ENCODE measurements at regions of chr3 and their contacts with region 1.

Region 1: DNA sequence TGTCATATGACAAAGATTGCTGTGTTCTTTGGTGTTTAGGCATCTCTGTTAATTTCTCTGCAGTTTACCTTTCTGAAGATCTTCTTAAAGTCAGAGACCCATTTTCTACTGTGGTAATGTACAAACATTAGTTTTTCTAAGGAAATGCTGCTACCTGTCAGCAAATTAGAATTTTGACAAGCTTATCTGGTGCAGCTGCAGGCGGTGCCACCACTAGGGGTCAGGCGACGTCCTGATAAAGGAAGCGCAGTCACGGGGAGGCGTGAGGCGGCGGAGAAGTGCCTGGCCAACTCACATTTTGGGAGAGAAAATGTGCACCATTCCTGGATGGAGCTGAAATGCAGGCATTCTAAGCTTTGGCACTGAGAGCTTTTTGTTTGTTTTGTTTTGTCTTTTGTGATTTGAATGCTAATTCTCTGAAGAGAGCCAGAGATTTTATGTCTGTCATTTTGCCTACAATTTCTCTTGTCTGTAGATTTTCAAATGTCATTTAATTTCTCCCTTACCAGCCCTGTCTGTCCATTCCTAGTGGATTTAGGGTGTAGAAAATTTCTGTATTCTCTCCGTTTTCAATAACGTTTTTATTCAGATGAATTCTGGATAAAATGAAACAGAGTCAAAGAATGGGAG is 24.9 kb upstream of the SIAH2 start:
- DNase-seq: peak; percentile 52 to 83 (median 80)
- ATAC-seq: peak; percentile 86
- H3K4me3 ChIP-seq: no peak overlapping the region
- H3K4me3 Mint-ChIP-seq: no peak overlapping the region
- H3K27ac ChIP-seq: no peak overlapping the region
- H3K27ac Mint-ChIP-seq: no peak overlapping the region
- H3K4me1 ChIP-seq: no peaks in the 10 kb centered on the region
- H3K4me1 Mint-ChIP-seq: peaks cover 3% of the 10 kb centered on the region
- H3K27me3 ChIP-seq: no peaks in the 10 kb centered on the region
- H3K27me3 Mint-ChIP-seq: peaks cover 3% of the 10 kb centered on the region
- CTCF ChIP-seq: peak; percentile 98

Region 2: DNA sequence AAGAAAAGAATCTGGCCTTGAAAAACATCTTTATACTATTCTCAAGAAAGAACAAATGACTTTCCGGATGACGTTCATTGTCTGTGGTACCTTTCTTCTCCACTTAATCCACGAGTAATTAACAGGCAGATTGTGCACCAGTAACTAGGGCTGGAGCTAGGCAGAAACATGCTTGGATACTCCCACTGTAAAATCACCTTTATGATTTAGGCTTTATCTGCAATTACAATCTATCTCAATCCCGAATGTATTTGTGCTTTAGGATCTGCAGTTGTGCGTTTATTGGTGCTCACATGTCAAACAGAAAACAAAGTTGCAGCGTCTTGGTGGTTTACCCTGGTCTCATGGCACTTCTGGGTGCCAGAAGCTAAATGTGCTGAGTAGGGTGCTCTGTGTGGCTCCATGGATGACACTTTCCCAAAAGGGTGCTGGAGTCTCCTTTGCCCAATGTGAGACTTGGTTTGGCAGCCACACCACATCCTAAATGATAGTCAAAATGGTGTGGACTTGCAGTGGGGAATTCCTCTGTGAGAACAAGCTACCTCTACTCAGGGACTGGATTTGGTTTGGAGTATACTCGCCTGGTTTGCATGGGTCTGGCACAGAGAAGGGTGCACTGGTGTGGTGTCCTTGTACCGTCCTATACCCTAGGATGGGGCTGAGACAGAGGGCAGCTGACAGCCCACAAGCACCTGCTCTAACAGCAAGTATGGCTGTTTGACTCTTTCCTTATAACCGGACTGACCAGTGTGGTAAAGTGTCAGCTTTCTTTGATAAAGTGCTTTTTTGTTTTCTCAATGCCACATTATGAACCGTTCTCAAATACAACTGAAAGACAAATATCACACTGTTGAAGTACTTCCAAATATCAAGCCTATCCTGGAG is 249.3 kb before region 1 on chr3:
- CTCF ChIA-PET with region 1: no interaction called
- POLR2A ChIA-PET with region 1: no interaction called
- intact Hi-C with region 1: no loop called
- DNase-seq: no peak
- ATAC-seq: no peak
- H3K4me3 ChIP-seq: no peak overlapping the region
- H3K4me3 Mint-ChIP-seq: no peak overlapping the region
- H3K27ac ChIP-seq: no peak overlapping the region
- H3K27ac Mint-ChIP-seq: peak overlapping the region; percentile 2
- H3K4me1 ChIP-seq: peaks cover 9% of the 10 kb centered on the region
- H3K4me1 Mint-ChIP-seq: peaks cover 25% of the 10 kb centered on the region
- H3K27me3 ChIP-seq: no peaks in the 10 kb centered on the region
- H3K27me3 Mint-ChIP-seq: no peaks in the 10 kb centered on the region
- CTCF ChIP-seq: no peak

Region 3: GRCh38 chr3:150775091-150775501 is 12.8 kb before region 1 on chr3:
- CTCF ChIA-PET with region 1: interaction called, 11 read pairs
- POLR2A ChIA-PET with region 1: no interaction called
- intact Hi-C with region 1: no loop called
- DNase-seq: no peak
- ATAC-seq: no peak
- H3K4me3 ChIP-seq: no peak overlapping the region
- H3K4me3 Mint-ChIP-seq: no peak overlapping the region
- H3K27ac ChIP-seq: no peak overlapping the region
- H3K27ac Mint-ChIP-seq: no peak overlapping the region
- H3K4me1 ChIP-seq: no peaks in the 10 kb centered on the region
- H3K4me1 Mint-ChIP-seq: no peaks in the 10 kb centered on the region
- H3K27me3 ChIP-seq: no peaks in the 10 kb centered on the region
- H3K27me3 Mint-ChIP-seq: peaks cover 4% of the 10 kb centered on the region
- CTCF ChIP-seq: no peak

Region 4: GRCh38 chr3:150806185-150806835 is 18.5 kb after region 1 on chr3:
- CTCF ChIA-PET with region 1: interaction called, 22 read pairs
- POLR2A ChIA-PET with region 1: no interaction called
- intact Hi-C with region 1: no loop called
- DNase-seq: no peak
- ATAC-seq: no peak
- H3K4me3 ChIP-seq: no peak overlapping the region
- H3K4me3 Mint-ChIP-seq: no peak overlapping the region
- H3K27ac ChIP-seq: no peak overlapping the region
- H3K27ac Mint-ChIP-seq: no peak overlapping the region
- H3K4me1 ChIP-seq: no peaks in the 10 kb centered on the region
- H3K4me1 Mint-ChIP-seq: no peaks in the 10 kb centered on the region
- H3K27me3 ChIP-seq: no peaks in the 10 kb centered on the region
- H3K27me3 Mint-ChIP-seq: peaks cover 5% of the 10 kb centered on the region
- CTCF ChIP-seq: no peak

Region 5: GRCh38 chr3:150936693-150937092 is 148.8 kb after region 1 on chr3:
- CTCF ChIA-PET with region 1: no interaction called
- POLR2A ChIA-PET with region 1: no interaction called
- intact Hi-C with region 1: no loop called
- DNase-seq: no peak
- ATAC-seq: no peak
- H3K4me3 ChIP-seq: no peak overlapping the region
- H3K4me3 Mint-ChIP-seq: no peak overlapping the region
- H3K27ac ChIP-seq: no peak overlapping the region
- H3K27ac Mint-ChIP-seq: no peak overlapping the region
- H3K4me1 ChIP-seq: no peaks in the 10 kb centered on the region
- H3K4me1 Mint-ChIP-seq: no peaks in the 10 kb centered on the region
- H3K27me3 ChIP-seq: no peaks in the 10 kb centered on the region
- H3K27me3 Mint-ChIP-seq: peaks cover 16% of the 10 kb centered on the region
- CTCF ChIP-seq: no peak

Region 6: GRCh38 chr3:151082880-151083733 is 295.3 kb after region 1 on chr3:
- CTCF ChIA-PET with region 1: no interaction called
- POLR2A ChIA-PET with region 1: no interaction called
- intact Hi-C with region 1: no loop called
- DNase-seq: no peak
- ATAC-seq: no peak
- H3K4me3 ChIP-seq: no peak overlapping the region
- H3K4me3 Mint-ChIP-seq: no peak overlapping the region
- H3K27ac ChIP-seq: no peak overlapping the region
- H3K27ac Mint-ChIP-seq: no peak overlapping the region
- H3K4me1 ChIP-seq: peaks cover 9% of the 10 kb centered on the region
- H3K4me1 Mint-ChIP-seq: peaks cover 15% of the 10 kb centered on the region
- H3K27me3 ChIP-seq: peaks cover 3 to 6% of the 10 kb centered on the region in 2 experiments
- H3K27me3 Mint-ChIP-seq: peaks cover 43% of the 10 kb centered on the region
- CTCF ChIP-seq: no peak

Region 7: DNA sequence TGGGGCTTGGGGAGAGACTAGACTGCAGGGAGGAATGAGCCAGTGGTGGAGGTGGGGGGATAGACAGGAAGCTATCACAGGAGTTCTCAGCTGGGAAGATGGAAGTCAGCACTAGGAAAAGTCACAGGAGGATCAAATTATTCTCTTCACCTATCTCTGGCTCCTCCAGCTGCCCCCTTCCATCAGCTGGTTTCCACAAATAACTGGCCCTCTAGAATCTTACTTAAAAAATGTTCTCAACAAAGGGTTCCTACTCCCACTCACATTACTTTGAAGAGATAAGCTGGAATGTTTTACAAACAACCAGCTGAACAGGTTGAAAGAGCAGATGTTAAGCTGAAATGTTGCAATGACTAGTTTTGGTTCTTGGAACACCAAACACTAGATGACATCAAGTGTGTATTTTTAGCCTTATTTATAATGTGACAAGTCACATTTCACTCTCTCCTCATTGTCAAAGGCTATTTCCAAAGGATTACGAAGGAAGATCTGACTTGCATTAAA is 843.1 kb after region 1 on chr3:
- CTCF ChIA-PET with region 1: no interaction called
- POLR2A ChIA-PET with region 1: no interaction called
- intact Hi-C with region 1: no loop called
- DNase-seq: no peak
- ATAC-seq: no peak
- H3K4me3 ChIP-seq: no peak overlapping the region
- H3K4me3 Mint-ChIP-seq: no peak overlapping the region
- H3K27ac ChIP-seq: no peak overlapping the region
- H3K27ac Mint-ChIP-seq: no peak overlapping the region
- H3K4me1 ChIP-seq: no peaks in the 10 kb centered on the region
- H3K4me1 Mint-ChIP-seq: no peaks in the 10 kb centered on the region
- H3K27me3 ChIP-seq: no peaks in the 10 kb centered on the region
- H3K27me3 Mint-ChIP-seq: peaks cover 2% of the 10 kb centered on the region
- CTCF ChIP-seq: no peak